ENCODE measurements at regions of chr2 and their contacts with region 1.

Region 1: GRCh38 chr2:75403991-75404428 is 156.7 kb downstream of the EVA1A start:
- DNase-seq: no peak
- ATAC-seq: peak; percentile 67 to 72
- H3K4me3 ChIP-seq: no peak overlapping the region
- H3K27ac ChIP-seq: no peak overlapping the region
- H3K4me1 ChIP-seq: no peaks in the 10 kb centered on the region
- H3K27me3 ChIP-seq: no peaks in the 10 kb centered on the region
- CTCF ChIP-seq: peak; percentile 72

Region 2: GRCh38 chr2:74919827-74920226 is 484.2 kb before region 1 on chr2:
- intact Hi-C with region 1: loop called (anchors 10 kb)
- DNase-seq: peak; percentile 83
- ATAC-seq: peak; percentile 77 to 78
- H3K4me3 ChIP-seq: peak overlapping the region; percentile 46
- H3K27ac ChIP-seq: no peak overlapping the region
- H3K4me1 ChIP-seq: peaks cover 7% of the 10 kb centered on the region
- H3K27me3 ChIP-seq: peaks cover 4% of the 10 kb centered on the region
- CTCF ChIP-seq: peak; percentile 92